ENCODE measurements at regions of chr15 and their contacts with region 1.

Region 1: DNA sequence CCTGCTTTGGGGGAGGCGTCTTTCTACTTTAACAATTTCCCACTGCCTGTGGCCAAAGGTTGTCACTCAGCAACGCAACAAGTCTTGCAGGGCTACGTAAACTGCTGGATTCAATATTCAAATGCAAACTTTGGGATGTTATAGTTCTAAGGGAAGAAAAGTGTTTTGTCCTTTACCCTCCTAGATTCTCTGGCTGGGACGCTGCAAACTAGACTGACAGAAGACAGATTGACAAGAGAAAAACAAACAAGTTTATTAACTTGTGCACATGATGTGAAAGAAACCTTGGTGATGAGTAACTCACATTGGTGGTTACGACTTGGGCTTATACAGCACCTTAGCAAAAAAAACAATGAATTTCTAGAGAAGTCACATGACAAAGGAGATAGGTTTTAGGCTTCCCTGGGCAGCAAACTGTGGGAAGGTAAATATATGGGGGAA is 34.0 kb upstream of the ARPIN start:
- DNase-seq: no peak
- H3K4me3 ChIP-seq: no peak overlapping the region
- H3K27ac ChIP-seq: no peak overlapping the region
- H3K4me1 ChIP-seq: no peaks in the 10 kb centered on the region
- H3K27me3 ChIP-seq: no peaks in the 10 kb centered on the region
- CTCF ChIP-seq: no peak

Region 2: GRCh38 chr15:89627256-89627970 is 319.4 kb before region 1 on chr15:
- CTCF ChIA-PET with region 1: no interaction called
- POLR2A ChIA-PET with region 1: no interaction called
- intact Hi-C with region 1: no loop called
- DNase-seq: no peak
- H3K4me3 ChIP-seq: no peak overlapping the region
- H3K27ac ChIP-seq: no peak overlapping the region
- H3K4me1 ChIP-seq: no peaks in the 10 kb centered on the region
- H3K27me3 ChIP-seq: no peaks in the 10 kb centered on the region
- CTCF ChIP-seq: no peak

Region 3: DNA sequence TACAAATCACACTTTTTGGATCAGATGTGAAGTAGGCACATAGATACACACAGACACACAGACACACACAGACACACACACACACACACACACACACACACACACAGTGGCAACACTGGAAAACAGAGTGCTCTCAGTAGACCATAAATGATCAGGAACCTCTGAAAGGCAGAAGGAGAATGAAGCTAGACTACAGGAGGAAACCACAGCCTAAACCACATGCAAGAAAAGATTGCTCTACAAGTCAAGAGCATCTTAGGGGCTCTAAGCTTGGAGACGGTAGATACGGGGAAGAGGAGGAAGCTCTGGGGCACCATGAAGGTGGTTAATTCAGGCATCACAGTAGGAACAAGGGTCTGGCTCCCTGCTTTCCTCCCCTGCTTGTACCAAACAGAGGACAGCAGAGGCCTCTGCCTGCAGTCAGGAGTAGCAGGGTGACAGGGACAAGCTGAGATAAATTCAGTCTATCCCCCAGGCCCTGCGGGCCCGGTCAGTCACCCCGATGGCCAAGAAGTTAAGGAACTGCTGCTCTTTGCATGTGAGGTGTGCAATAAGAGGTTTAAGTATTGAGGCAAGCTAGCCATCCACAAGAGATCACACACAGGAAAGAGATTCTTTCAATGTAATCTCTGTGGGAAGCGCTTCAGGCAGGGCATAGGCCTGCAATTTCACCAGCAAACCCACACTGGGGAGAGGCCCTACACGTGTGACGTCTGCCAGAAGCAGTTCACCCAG is 10.6 kb before region 1 on chr15:
- CTCF ChIA-PET with region 1: no interaction called
- POLR2A ChIA-PET with region 1: interaction called, 13 read pairs
- intact Hi-C with region 1: no loop called
- DNase-seq: no peak
- H3K4me3 ChIP-seq: no peak overlapping the region
- H3K27ac ChIP-seq: no peak overlapping the region
- H3K4me1 ChIP-seq: no peaks in the 10 kb centered on the region
- H3K27me3 ChIP-seq: no peaks in the 10 kb centered on the region
- CTCF ChIP-seq: no peak

Measured in A673 (cell line).